ENCODE measurements at regions of chr22 and their contacts with region 1.

Region 1: GRCh38 chr22:27919222-27919941 is at the start of gene PITPNB:
- DNase-seq: peak; percentile 95 to 96
- ATAC-seq: peak; percentile 94 to 96
- H3K4me3 ChIP-seq: peak within 1 kb of the TSS; percentile 86 to 98 (median 90)
- H3K27ac ChIP-seq: peak within 1 kb of the TSS; percentile 95 to 100 (median 98)
- H3K4me1 ChIP-seq: peaks cover 23 to 36% of the 10 kb centered on the region in 2 donors
- H3K27me3 ChIP-seq: no peaks in the 10 kb centered on the region
- CTCF ChIP-seq: no peak
- POLR2A ChIP-seq: peak; percentile 95 to 96
- total RNA-seq, gene PITPNB: 12.1 to 18.7 (median 16.1) TPM

Region 2: DNA sequence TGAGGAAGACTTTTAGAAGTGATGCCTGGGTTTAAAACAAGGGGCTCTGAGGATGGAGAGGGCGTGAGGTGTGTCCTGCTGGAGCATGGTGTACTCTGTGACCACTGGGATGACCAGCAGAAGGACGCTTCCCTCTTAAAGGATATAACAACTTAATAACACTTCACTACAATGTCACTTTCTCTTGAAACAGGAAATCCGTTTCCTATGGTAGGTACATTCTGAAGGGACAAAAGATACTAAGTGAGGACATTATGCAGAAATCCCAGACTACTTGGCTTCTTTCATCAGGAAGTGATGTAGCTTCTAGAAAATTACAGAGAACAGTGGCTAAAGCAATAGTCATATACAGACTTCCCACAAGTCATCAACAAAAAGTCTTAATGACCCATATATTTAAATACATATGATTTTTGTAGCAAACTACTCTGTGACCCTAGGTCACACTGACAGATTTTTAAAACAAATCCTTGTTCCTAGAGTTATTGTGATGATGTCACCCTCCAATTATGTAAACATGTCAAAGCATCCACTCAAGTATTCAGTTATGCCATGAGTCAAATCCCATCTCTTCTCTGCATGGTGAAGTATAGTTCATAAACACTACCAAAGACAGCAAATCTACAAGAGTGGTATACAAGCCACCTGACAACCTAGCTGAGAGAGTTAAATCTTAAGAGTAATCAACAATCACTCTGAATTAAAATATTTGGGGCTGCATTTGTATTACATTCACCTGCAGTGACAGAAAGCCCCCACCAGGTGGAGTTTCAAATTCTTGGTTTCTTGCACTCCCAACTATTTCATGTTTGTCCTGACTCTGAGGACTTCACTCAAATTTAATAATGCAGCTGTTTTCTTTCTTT is 33.2 kb before region 1 on chr22:
- in situ Hi-C with region 1: no loop called
- intact Hi-C with region 1: loop called (anchors 2 kb)
- DNase-seq: peak in 1 of 2 donors; percentile 23
- ATAC-seq: peak in 1 of 2 donors; percentile 54
- H3K4me3 ChIP-seq: no peak overlapping the region
- H3K27ac ChIP-seq: peak overlapping the region in 3 of 4 donors; percentile 20 to 32 (median 20)
- H3K4me1 ChIP-seq: peaks cover 3 to 17% of the 10 kb centered on the region in 2 donors
- H3K27me3 ChIP-seq: no peaks in the 10 kb centered on the region
- CTCF ChIP-seq: peak; percentile 81 to 90 (median 86)
- POLR2A ChIP-seq: no peak

Region 3: GRCh38 chr22:27959335-27960090 is 40.1 kb after region 1 on chr22:
- in situ Hi-C with region 1: no loop called
- intact Hi-C with region 1: loop called (anchors 2 kb)
- DNase-seq: peak; percentile 55 to 72
- ATAC-seq: peak; percentile 82 to 94
- H3K4me3 ChIP-seq: no peak overlapping the region
- H3K27ac ChIP-seq: peak overlapping the region; percentile 76 to 84 (median 82)
- H3K4me1 ChIP-seq: peaks cover 26 to 28% of the 10 kb centered on the region in 2 donors
- H3K27me3 ChIP-seq: no peaks in the 10 kb centered on the region
- CTCF ChIP-seq: no peak
- POLR2A ChIP-seq: no peak

Region 4: GRCh38 chr22:27990879-27991278 is 71.5 kb after region 1 on chr22:
- in situ Hi-C with region 1: no loop called
- intact Hi-C with region 1: loop called (anchors 5 kb)
- DNase-seq: peak; percentile 51 to 74
- ATAC-seq: peak; percentile 74 to 85
- H3K4me3 ChIP-seq: peak overlapping the region in 1 of 4 donors; percentile 15
- H3K27ac ChIP-seq: peak overlapping the region; percentile 61 to 75 (median 72)
- H3K4me1 ChIP-seq: peaks cover 9 to 12% of the 10 kb centered on the region in 2 donors
- H3K27me3 ChIP-seq: no peaks in the 10 kb centered on the region
- CTCF ChIP-seq: peak in 4 of 5 experiments; percentile 35 to 60 (median 50)
- POLR2A ChIP-seq: no peak

Region 5: GRCh38 chr22:28112548-28113043 is 193.2 kb after region 1 on chr22:
- in situ Hi-C with region 1: no loop called
- intact Hi-C with region 1: no loop called
- DNase-seq: peak; percentile 49 to 70
- ATAC-seq: peak; percentile 91 to 92
- H3K4me3 ChIP-seq: peak overlapping the region; percentile 11 to 53 (median 28)
- H3K27ac ChIP-seq: peak overlapping the region; percentile 68 to 78 (median 71)
- H3K4me1 ChIP-seq: peaks cover 11 to 23% of the 10 kb centered on the region in 2 donors
- H3K27me3 ChIP-seq: no peaks in the 10 kb centered on the region
- CTCF ChIP-seq: peak; percentile 22 to 59 (median 53)
- POLR2A ChIP-seq: no peak